ENCODE measurements at regions of chr9 and their contacts with region 1.

Region 1: DNA sequence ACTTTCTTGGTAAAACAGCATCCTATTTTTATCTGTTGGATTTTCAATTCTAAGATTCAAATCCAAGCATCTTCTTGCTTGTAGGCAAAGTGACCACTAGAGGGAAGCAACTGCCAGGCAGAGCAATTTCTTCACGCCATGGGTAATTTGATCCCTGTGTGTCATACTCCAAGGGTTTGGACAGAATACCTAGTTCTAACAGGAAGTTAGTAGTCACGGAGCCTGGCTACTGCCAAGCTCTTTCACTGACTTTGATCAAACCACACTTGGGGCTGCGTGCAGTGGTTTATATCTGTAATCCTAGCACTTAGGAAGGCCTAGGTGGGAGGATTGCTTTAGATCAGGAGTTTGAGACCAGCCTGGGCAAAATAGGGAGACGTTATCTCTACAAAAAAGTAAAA is 473.6 kb upstream of the TNC start:
- DNase-seq: peak; percentile 95
- ATAC-seq: peak; percentile 90
- H3K4me3 ChIP-seq: no peak overlapping the region
- H3K27ac ChIP-seq: peak overlapping the region; percentile 87
- H3K4me1 ChIP-seq: peaks cover 47% of the 10 kb centered on the region
- H3K27me3 ChIP-seq: no peaks in the 10 kb centered on the region
- CTCF ChIP-seq: peak; percentile 88

Region 2: GRCh38 chr9:115672477-115673316 is 81.1 kb after region 1 on chr9:
- CTCF ChIA-PET with region 1: interaction called, 7 read pairs
- POLR2A ChIA-PET with region 1: no interaction called
- intact Hi-C with region 1: loop called (anchors 2 kb)
- DNase-seq: peak; percentile 71
- ATAC-seq: peak; percentile 84
- H3K4me3 ChIP-seq: peak overlapping the region; percentile 18; the same call in 1 of the 2 replicates
- H3K27ac ChIP-seq: peak overlapping the region; percentile 95
- H3K4me1 ChIP-seq: peaks cover 31% of the 10 kb centered on the region
- H3K27me3 ChIP-seq: no peaks in the 10 kb centered on the region
- CTCF ChIP-seq: no peak

Region 3: GRCh38 chr9:115883457-115884329 is 292.1 kb after region 1 on chr9:
- CTCF ChIA-PET with region 1: interaction called, 14 read pairs
- POLR2A ChIA-PET with region 1: no interaction called
- intact Hi-C with region 1: loop called (anchors 1 kb)
- DNase-seq: peak; percentile 69
- ATAC-seq: peak; percentile 76
- H3K4me3 ChIP-seq: no peak overlapping the region
- H3K27ac ChIP-seq: no peak overlapping the region
- H3K4me1 ChIP-seq: no peaks in the 10 kb centered on the region
- H3K27me3 ChIP-seq: no peaks in the 10 kb centered on the region
- CTCF ChIP-seq: peak; percentile 76

Region 4: DNA sequence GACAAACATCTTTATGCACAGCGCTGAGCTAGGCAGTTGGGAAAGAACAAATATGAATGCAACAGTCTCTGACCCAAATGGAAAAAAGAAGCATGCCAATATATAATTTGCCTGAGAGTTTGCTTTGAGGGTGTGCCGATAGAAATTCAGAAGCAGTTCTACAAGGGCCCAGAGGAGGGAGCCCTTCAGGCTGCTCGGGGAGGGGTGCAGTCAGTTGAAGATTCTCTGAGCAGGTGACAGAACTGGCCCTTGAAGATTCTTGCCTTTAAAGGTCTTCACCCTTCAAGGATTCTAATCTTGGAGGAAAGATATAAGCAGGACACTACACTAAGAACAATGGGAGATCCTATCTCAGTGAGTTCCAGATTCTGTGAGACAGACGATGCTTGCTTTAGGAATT is 558.3 kb after region 1 on chr9:
- CTCF ChIA-PET with region 1: no interaction called
- POLR2A ChIA-PET with region 1: no interaction called
- intact Hi-C with region 1: loop called (anchors 5 kb)
- DNase-seq: peak; percentile 42
- ATAC-seq: no peak
- H3K4me3 ChIP-seq: no peak overlapping the region
- H3K27ac ChIP-seq: no peak overlapping the region
- H3K4me1 ChIP-seq: peaks cover 14% of the 10 kb centered on the region
- H3K27me3 ChIP-seq: no peaks in the 10 kb centered on the region
- CTCF ChIP-seq: peak; percentile 66

Region 5: GRCh38 chr9:116494815-116495634 is 903.4 kb after region 1 on chr9:
- CTCF ChIA-PET with region 1: no interaction called
- POLR2A ChIA-PET with region 1: no interaction called
- intact Hi-C with region 1: loop called (anchors 2 kb)
- DNase-seq: peak; percentile 46
- ATAC-seq: peak; percentile 28; the same call in 1 of the 2 replicates
- H3K4me3 ChIP-seq: no peak overlapping the region
- H3K27ac ChIP-seq: no peak overlapping the region
- H3K4me1 ChIP-seq: no peaks in the 10 kb centered on the region
- H3K27me3 ChIP-seq: no peaks in the 10 kb centered on the region
- CTCF ChIP-seq: peak; percentile 69

Region 6: GRCh38 chr9:116646661-116647512 is 1055.3 kb after region 1 on chr9:
- CTCF ChIA-PET with region 1: no interaction called
- POLR2A ChIA-PET with region 1: no interaction called
- intact Hi-C with region 1: loop called (anchors 2 kb)
- DNase-seq: peak; percentile 51
- ATAC-seq: peak; percentile 70
- H3K4me3 ChIP-seq: no peak overlapping the region
- H3K27ac ChIP-seq: no peak overlapping the region
- H3K4me1 ChIP-seq: no peaks in the 10 kb centered on the region
- H3K27me3 ChIP-seq: no peaks in the 10 kb centered on the region
- CTCF ChIP-seq: peak; percentile 63

Measured in PC-3 (cell line).